Right lobe of liver (tissue), 6 donors: ENCODE measurements at regions of chr6 and their contacts with region 1.

Region 1: DNA sequence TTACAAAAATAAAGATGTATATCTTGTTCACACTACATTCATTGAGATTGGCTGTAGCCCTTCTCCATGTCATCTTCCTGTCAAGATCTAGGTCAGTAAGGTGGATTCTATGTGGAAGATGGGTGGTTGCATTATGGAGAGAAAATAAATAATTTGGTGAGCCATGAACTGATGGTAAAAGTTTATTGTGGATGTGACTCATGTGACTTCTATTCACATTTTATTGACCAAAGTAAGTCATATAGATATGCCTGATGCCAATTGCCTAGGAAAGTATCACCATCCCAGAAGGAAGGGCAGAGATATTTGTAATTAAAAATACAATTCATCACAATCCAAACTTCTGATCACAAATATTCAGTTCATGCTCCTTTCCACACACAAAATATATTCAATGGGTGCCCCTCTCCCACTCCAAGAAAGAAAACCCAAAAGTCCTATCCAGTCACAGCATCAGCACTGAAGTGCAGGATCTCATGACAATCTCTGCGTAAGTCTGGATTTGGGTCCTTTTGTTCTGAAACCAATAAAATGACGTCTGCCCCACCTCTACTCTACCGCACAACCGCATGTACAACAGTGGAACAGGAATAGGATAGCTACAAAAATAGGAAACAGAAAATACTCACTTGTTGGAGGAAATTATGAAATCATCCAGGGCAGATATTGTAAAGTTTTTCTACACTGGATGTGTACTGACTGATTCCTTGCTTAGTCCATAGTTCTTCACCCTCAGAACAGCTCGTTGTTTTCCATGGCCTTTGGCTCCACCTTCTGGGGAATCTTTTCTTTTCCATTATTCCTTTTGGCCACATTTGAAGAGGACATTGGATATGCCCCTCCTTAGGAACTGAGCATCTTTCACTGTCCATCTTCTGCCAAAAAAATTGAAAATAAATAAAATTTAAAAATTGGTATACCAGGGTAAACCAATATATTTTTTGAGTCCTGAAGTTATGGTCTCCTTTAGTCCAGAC is 16.1 kb upstream of the SLC17A3 start:
- DNase-seq: peak in 1 of 3 donors; percentile 60
- ATAC-seq: peak; percentile 94 to 98 (median 96)
- H3K4me3 ChIP-seq: no peak overlapping the region
- H3K27ac ChIP-seq: no peak overlapping the region
- H3K4me1 ChIP-seq: peaks cover 0 to 3% (median 0%) of the 10 kb centered on the region in 4 donors
- H3K27me3 ChIP-seq: no peaks in the 10 kb centered on the region
- CTCF ChIP-seq: peak; percentile 52 to 77 (median 64)
- POLR2A ChIP-seq: no peak

Region 2: GRCh38 chr6:25835442-25836283 is 54.5 kb before region 1 on chr6:
- intact Hi-C with region 1: loop called in 1 of 2 experiments (anchors 10 kb)
- DNase-seq: peak in 1 of 3 donors; percentile 25
- ATAC-seq: peak in 2 of 4 donors; percentile 27 to 49
- H3K4me3 ChIP-seq: no peak overlapping the region
- H3K27ac ChIP-seq: no peak overlapping the region
- H3K4me1 ChIP-seq: peaks cover 0 to 12% (median 6%) of the 10 kb centered on the region in 4 donors
- H3K27me3 ChIP-seq: no peaks in the 10 kb centered on the region
- CTCF ChIP-seq: no peak
- POLR2A ChIP-seq: no peak

Region 3: DNA sequence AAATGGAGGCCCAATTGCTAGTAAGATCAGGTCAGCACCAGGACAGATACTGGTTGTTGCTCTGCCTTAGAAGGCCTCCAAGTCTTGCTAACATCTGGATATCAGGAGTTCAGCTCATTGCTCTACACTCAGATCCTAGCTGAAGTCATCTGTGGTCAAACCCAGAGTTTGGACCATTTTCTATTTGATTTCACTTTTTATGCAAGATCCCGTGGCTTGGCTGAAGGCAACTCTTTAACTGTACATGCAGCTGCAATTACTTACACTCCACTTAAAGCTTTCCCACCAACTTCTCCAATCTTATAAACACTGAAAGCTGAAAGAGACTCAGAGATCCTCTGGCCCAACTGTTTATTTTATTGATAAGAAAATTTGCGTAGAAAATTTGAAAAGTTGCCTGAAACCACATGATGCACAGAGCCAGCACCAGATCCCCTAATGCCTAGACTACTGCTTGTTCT is 37.6 kb after region 1 on chr6:
- intact Hi-C with region 1: no loop called
- DNase-seq: no peak
- ATAC-seq: peak; percentile 17 to 27 (median 24)
- H3K4me3 ChIP-seq: peak overlapping the region; percentile 6 to 49 (median 47)
- H3K27ac ChIP-seq: peak overlapping the region; percentile 89 to 91 (median 91)
- H3K4me1 ChIP-seq: peaks cover 0 to 33% (median 3%) of the 10 kb centered on the region in 4 donors
- H3K27me3 ChIP-seq: no peaks in the 10 kb centered on the region
- CTCF ChIP-seq: no peak
- POLR2A ChIP-seq: no peak